ENCODE measurements at regions of chr20 and their contacts with region 1.

Region 1: DNA sequence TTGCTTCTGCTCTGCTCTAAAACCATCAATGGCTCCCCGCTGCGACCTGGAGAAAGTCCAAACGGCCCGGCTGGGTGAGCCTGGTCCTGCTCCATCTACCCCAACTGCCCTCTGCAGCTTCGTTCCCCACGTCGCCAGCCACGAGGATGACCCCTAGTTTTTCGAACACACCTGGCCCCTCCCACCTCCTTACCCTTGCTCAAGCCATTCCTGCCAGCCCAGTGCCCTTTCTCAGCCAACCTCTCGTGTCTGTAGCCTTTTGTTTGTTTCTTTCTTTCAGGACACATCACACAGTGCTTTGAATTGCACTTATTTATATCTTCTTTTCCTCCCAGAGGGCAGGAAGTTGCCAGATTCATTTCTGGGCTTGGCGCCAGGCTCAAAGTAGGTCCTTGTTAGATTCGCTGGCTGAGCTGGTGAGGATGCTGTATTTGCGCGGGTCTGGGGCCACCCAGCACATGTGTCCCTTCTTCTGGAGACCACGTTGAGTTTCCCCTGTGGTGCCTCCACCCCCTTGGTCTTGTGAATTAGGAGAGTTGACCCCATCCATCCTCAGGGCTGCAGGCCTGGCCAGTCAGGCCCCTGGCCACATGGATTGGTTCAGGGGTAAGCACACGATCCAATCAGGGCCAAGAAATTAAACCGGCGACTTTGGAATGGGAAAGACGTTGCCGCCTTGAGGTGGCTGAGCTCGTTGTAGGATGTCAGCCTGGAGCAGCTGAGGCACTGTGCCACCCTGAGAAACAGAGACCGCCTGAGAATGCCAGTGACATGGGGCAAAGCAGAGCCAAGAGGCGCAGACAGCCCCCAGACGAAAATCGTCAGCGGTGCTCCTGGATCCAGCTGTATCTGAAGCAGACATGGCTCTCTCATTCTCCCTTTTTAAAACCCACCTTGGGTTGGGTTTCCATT is 156.0 kb downstream of the CEBPB start:
- DNase-seq: peak; percentile 97
- H3K4me3 ChIP-seq: peak overlapping the region in 3 of 4 donors; percentile 17 to 29 (median 24)
- H3K27ac ChIP-seq: peak overlapping the region; percentile 53 to 76 (median 66)
- H3K4me1 ChIP-seq: peaks cover 18 to 33% (median 30%) of the 10 kb centered on the region in 4 donors
- H3K27me3 ChIP-seq: no peaks in the 10 kb centered on the region
- CTCF ChIP-seq: no peak
- EP300 ChIP-seq: no peak
- POLR2A ChIP-seq: no peak

Region 2: GRCh38 chr20:50418890-50419642 is 72.4 kb after region 1 on chr20:
- intact Hi-C with region 1: loop called (anchors 2 kb)
- DNase-seq: no peak
- H3K4me3 ChIP-seq: no peak overlapping the region
- H3K27ac ChIP-seq: peak overlapping the region; percentile 23 to 100 (median 74)
- H3K4me1 ChIP-seq: peaks cover 41 to 68% (median 64%) of the 10 kb centered on the region in 4 donors
- H3K27me3 ChIP-seq: no peaks in the 10 kb centered on the region
- CTCF ChIP-seq: no peak
- EP300 ChIP-seq: no peak
- POLR2A ChIP-seq: no peak